MCF 10A (cell line): ENCODE measurements at regions of chr3 and their contacts with region 1.

Region 1: DNA sequence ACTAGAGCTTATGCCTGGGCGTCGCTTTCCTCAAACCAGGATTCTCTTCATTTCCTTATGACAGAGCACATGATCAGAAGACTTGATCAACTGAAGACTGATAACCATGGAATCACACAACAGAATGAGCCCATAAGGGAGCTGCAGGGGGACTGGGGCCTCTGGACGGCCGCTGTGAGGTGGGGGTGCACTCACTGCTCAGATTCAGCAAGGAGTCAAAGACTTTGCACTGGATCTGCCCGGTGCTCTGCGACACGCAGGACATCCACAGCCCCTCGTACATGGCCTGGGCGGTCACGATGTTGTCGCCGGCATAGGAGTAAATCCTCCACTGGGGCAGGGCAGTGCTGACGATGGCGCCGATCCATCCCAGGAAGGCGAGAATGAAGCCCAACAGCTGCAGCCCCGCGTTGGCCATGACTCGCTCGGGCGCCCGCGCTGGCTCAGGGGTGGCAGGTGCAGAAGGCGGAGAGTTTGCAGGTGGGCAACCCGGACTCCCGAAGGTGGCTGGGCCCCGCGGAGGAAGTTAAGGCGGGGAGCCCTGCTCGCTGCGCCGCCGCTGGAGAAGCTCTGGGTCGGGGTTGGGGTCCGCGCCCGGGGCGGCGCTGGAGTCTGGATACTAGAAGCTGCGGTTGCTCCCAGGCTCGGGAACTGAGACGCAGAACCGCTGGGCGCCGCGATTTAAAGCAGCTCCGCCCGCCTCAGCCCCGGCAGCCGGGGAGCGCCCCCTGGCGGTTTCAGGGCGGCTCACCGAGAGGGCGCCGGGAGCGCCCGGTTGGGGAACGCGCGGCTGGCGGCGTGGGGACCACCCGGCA is at the start of gene CLDN1:
- DNase-seq: peak; percentile 84
- H3K4me3 Mint-ChIP-seq: peak within 1 kb of the TSS; percentile 95
- H3K27ac Mint-ChIP-seq: peak within 1 kb of the TSS; percentile 96
- H3K4me1 Mint-ChIP-seq: peaks cover 51% of the 10 kb centered on the region
- H3K27me3 Mint-ChIP-seq: no peaks in the 10 kb centered on the region
- CTCF ChIP-seq: peak; percentile 92
- total RNA-seq, gene CLDN1: 197 and 263 TPM in 2 replicates

Region 2: DNA sequence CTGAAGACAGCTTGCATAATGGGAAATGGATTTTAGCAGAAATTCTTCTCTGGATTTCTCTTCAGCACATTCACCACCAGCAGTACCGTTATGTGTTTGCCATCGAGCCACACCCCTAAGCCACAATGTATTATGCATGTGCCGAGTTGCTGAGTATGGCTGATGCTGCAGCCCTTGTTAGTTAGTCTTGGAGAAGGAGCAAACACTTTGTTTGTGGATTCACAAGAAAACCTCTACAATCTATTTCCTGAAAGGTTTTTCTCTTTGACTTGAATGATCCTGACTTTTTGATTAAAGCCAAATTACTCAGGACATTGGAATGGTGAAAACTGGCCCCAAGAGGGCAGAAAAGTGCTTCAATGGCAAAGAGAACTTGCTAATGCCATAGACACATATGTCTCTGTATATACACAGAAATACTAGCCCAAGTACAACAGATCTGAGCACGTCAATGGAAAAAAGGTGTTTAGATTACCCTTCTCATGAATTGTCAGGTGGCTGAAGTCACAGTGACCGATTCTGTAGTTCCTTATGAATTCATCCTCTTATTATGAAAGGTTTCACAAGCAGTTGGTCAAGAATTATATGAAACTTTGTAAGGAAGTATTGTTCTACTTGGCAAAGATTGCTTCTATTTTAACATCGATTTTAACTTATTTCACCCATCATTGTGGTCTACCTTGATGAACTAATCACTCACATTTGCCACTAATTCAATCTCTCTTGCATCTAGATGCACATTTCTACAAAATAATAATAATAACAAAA is 304.3 kb before region 1 on chr3:
- CTCF ChIA-PET with region 1: interaction called, 4 read pairs
- POLR2A ChIA-PET with region 1: interaction called, 8 read pairs
- intact Hi-C with region 1: loop called (anchors 1 kb)
- DNase-seq: peak; percentile 78
- H3K4me3 Mint-ChIP-seq: no peak overlapping the region
- H3K27ac Mint-ChIP-seq: no peak overlapping the region
- H3K4me1 Mint-ChIP-seq: peaks cover 26% of the 10 kb centered on the region
- H3K27me3 Mint-ChIP-seq: no peaks in the 10 kb centered on the region
- CTCF ChIP-seq: peak; percentile 74

Region 3: GRCh38 chr3:190224863-190225692 is 96.9 kb before region 1 on chr3:
- CTCF ChIA-PET with region 1: interaction called, 195 read pairs
- POLR2A ChIA-PET with region 1: interaction called, 70 read pairs
- intact Hi-C with region 1: loop called (anchors 1 kb)
- DNase-seq: peak; percentile 57
- H3K4me3 Mint-ChIP-seq: no peak overlapping the region
- H3K27ac Mint-ChIP-seq: no peak overlapping the region
- H3K4me1 Mint-ChIP-seq: peaks cover 16% of the 10 kb centered on the region
- H3K27me3 Mint-ChIP-seq: no peaks in the 10 kb centered on the region
- CTCF ChIP-seq: peak; percentile 50

Region 4: DNA sequence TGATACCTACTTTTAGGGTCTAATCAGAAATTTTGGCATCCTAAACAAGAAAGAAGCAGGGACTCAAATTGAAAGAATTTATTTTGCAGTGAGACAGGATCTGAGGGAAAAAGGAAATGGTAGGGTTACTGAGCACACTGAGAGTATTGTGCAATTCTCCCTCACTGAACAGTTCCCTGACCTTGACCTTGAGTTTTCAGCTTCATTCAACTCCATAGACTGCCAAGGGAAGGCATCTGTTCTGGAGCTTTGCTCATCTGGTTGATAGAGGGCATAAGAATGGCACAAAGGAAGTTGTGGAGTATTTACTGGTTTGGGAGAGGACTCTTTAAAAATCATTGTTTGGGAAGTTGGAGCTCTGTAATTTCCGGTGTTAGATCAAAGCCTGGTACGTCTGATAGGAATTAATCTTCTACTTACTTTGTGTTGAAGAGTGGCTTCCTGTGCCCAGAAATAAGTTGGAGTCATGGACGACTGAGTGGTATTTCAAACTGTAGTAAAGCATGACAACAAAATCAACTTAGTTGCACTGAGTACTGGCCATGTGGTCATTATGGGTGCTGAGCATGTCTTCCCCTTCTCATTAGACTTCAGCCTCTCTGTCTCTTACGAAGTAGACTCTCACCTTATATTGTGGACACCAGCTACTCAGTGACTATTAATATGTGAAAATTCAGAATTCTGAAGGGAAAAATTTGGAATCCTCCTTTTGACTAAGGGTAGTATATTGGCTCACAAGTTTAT is 40.5 kb before region 1 on chr3:
- CTCF ChIA-PET with region 1: no interaction called
- POLR2A ChIA-PET with region 1: interaction called, 10 read pairs
- intact Hi-C with region 1: no loop called
- DNase-seq: peak; percentile 20
- H3K4me3 Mint-ChIP-seq: no peak overlapping the region
- H3K27ac Mint-ChIP-seq: no peak overlapping the region
- H3K4me1 Mint-ChIP-seq: peaks cover 8% of the 10 kb centered on the region
- H3K27me3 Mint-ChIP-seq: no peaks in the 10 kb centered on the region
- CTCF ChIP-seq: no peak

Region 5: DNA sequence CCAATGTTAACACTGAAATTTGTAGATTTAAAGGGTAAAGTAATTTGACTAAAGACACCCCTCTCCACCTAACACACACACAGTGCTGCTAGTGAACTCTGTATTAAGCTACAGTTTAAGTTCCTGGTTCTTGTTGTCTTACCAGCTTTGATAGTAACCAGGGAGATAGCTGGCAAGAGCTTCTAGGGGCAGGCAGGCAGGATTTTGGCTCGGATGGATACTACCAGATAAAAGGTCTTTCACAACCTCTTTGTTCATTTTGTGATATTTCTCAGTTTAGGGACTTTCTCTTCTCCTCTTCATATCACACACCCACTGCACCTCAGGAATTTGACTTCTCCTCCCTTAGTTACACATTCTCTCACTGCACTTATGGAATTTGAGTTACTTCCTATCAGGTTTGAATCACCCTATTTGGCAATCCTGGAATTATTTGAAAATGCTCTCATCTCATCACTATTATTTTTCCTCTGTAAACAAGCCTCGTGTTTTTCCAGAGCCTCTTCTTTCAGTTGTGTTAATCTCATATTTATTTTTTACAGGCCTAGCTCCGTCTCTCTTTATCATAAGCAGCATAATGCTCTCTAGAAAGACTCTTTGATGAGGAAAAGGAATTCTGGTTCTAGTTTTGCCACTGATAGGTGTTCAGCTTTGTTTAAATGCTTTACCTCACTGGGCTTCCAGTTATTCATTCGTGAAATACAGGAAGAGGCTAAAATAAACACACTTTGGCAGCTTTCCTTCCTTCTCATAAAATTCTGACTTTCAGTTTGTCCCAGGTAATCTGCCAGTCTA is 23.2 kb after region 1 on chr3:
- CTCF ChIA-PET with region 1: interaction called, 22 read pairs
- POLR2A ChIA-PET with region 1: interaction called, 215 read pairs
- intact Hi-C with region 1: no loop called
- DNase-seq: peak; percentile 94
- H3K4me3 Mint-ChIP-seq: peak overlapping the region; percentile 58
- H3K27ac Mint-ChIP-seq: peak overlapping the region; percentile 99
- H3K4me1 Mint-ChIP-seq: peaks cover 40% of the 10 kb centered on the region
- H3K27me3 Mint-ChIP-seq: no peaks in the 10 kb centered on the region
- CTCF ChIP-seq: no peak

Region 6: DNA sequence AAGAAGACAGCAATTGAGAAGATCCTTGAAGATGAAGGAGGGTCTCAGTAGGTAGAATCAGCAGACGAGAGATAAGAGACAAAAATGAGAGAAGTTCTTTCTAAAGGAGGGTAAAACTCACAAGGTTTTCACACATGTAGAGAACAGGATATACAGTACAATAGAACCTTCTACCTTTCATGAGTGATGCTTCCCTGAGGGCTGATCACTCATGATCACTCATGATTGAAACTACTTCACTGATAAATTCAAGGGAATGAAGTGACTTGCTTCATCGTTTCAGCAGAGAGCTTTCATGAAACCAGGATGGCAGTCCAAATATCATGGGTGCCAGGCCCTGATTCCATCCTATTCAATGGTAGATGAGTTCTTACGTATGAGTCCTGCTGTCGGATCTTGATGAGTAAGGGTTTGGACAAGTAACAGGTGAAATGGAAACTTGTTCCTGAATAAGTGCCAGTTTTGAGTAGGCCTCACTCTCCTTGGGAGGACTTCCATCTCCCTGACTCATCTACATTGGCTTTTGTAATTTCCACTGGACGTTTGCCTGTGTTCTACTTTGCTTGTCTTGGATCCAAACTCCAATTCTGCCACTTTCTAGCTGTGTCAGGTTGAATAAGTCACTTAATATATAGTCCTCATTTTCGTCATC is 56.4 kb after region 1 on chr3:
- CTCF ChIA-PET with region 1: interaction called, 85 read pairs
- POLR2A ChIA-PET with region 1: interaction called, 104 read pairs
- intact Hi-C with region 1: no loop called
- DNase-seq: peak; percentile 98
- H3K4me3 Mint-ChIP-seq: no peak overlapping the region
- H3K27ac Mint-ChIP-seq: peak overlapping the region; percentile 2
- H3K4me1 Mint-ChIP-seq: peaks cover 55% of the 10 kb centered on the region
- H3K27me3 Mint-ChIP-seq: no peaks in the 10 kb centered on the region
- CTCF ChIP-seq: no peak

Region 7: DNA sequence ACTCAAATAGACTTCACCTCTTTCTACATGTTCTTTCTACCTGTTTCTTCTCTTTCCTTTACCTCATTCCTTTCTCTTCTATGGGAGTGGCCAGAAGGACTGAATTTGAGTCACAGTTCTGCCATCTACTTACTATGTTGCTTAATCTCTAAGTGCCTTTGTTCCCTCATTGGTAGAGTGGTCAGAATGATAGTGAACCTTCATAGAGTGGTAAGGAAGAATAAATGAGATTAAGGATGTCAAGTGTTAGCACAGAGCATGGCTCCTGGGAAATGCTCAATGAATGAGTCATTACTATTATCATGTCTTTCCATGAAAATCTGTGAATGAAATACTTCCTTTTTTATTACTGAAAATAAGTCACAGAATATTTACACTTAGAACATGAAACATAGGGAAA is 110.2 kb after region 1 on chr3:
- CTCF ChIA-PET with region 1: no interaction called
- POLR2A ChIA-PET with region 1: no interaction called
- intact Hi-C with region 1: no loop called
- DNase-seq: peak; percentile 30
- H3K4me3 Mint-ChIP-seq: no peak overlapping the region
- H3K27ac Mint-ChIP-seq: no peak overlapping the region
- H3K4me1 Mint-ChIP-seq: peaks cover 18% of the 10 kb centered on the region
- H3K27me3 Mint-ChIP-seq: no peaks in the 10 kb centered on the region
- CTCF ChIP-seq: no peak

Region 8: DNA sequence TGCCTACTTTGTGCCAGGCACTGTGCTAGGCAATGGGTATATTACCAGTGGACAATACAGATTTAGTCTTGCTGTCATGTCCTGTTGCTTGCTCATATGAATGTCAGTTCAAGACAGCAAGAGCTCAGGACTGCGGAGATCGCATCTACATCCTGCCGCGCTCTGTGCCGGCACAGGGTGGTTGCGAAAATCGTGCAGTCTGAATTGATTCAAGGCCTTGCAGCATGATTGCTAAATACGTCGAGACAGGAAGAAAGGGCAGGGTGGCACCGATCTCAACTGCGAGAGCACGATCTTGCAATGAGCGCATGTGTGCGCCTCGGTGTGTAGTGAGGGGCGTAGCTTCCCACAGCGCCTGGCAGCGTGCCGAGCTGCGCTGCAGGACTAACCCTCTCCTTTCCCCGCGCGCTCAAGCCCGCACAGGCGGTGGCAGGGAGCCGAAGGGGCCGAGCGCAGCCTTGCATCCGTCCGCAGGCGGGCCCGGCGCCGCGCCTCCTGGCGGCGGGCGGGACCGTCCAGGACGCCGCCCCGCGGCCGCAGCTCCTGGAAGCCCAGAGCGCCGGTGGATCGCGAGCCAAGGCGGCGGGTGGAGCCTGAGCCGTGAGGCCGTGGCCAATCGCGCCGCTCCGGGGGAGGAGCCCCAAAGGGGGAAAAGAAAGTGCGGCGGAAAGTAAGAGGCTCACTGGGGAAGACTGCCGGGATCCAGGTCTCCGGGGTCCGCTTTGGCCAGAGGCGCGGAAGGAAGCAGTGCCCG is 191.6 kb after region 1 on chr3 and contains the start of gene IL1RAP:
- CTCF ChIA-PET with region 1: no interaction called
- POLR2A ChIA-PET with region 1: interaction called, 18 read pairs
- intact Hi-C with region 1: no loop called
- DNase-seq: peak; percentile 95
- H3K4me3 Mint-ChIP-seq: peak within 1 kb of the TSS; percentile 88
- H3K27ac Mint-ChIP-seq: peak within 1 kb of the TSS; percentile 78
- H3K4me1 Mint-ChIP-seq: peaks cover 36% of the 10 kb centered on the region
- H3K27me3 Mint-ChIP-seq: no peaks in the 10 kb centered on the region
- CTCF ChIP-seq: peak; percentile 38
- total RNA-seq, gene IL1RAP: 46.5 and 62.0 TPM in 2 replicates

Region 9: DNA sequence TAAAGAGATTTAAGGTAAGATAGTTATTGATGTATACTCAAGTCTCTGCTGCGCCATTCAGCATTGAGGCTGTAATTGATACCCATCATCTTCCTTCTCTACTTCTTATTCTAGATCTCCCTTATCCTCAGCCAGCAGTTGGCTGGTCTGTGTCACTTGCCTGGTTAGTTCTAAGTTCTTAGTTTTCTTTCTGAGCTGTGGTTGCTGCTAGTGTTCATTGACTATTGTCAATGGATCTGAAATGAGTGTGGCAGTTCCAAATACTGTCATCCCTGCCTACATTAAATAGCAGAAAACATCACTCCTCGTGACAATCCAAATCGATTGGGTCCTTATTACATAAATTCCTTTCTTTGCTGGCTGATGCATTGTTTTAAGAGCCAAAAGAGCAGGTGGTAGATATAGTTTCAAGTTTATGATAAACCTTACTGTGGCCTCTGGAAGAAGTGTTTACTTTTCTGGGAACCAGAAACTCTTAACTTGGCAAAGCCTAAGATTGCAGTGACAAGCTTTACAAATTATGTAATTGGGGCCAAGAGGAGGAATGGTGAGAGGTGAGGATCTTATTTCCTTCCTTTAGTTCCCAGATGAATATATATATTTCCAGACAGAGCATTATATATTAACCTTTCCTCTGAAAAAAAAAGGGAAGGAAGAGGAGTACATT is 372.5 kb after region 1 on chr3:
- CTCF ChIA-PET with region 1: no interaction called
- POLR2A ChIA-PET with region 1: no interaction called
- intact Hi-C with region 1: no loop called
- DNase-seq: no peak
- H3K4me3 Mint-ChIP-seq: no peak overlapping the region
- H3K27ac Mint-ChIP-seq: no peak overlapping the region
- H3K4me1 Mint-ChIP-seq: peaks cover 5% of the 10 kb centered on the region
- H3K27me3 Mint-ChIP-seq: no peaks in the 10 kb centered on the region
- CTCF ChIP-seq: no peak